Tibial artery (tissue), 4 donors: ENCODE measurements at regions of chr6 and their contacts with region 1.

Region 1: GRCh38 chr6:104046426-104046825 is 813.3 kb downstream of the HACE1 start:
- DNase-seq: no peak
- H3K4me3 ChIP-seq: no peak overlapping the region
- H3K27ac ChIP-seq: no peak overlapping the region
- H3K4me1 ChIP-seq: no peaks in the 10 kb centered on the region
- H3K27me3 ChIP-seq: no peaks in the 10 kb centered on the region
- CTCF ChIP-seq: no peak

Region 2: GRCh38 chr6:102793752-102794151 is 1252.7 kb before region 1 on chr6:
- intact Hi-C with region 1: loop called (anchors 5 kb)
- DNase-seq: no peak
- H3K4me3 ChIP-seq: no peak overlapping the region
- H3K27ac ChIP-seq: no peak overlapping the region
- H3K4me1 ChIP-seq: no peaks in the 10 kb centered on the region
- H3K27me3 ChIP-seq: no peaks in the 10 kb centered on the region
- CTCF ChIP-seq: no peak

Region 3: DNA sequence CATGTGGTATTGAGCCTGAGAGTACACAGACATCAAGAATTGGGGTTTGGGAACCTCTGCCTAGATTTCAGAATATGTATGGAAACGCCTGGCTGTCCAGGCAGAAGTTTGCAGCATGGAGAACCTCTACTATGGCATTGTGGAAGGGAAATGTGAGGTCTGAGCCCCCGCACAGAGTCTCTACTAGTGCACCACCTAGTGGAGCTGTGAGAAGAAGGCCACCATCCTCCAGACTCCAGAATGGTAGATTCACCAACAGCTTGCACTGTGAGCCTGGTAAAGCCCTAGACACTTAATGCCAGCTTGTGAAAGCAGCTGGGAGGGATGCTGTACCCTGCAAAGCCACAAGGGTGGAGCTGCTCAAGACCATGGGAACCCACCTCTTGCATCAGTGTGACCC is 155.1 kb after region 1 on chr6:
- intact Hi-C with region 1: no loop called
- DNase-seq: no peak
- H3K4me3 ChIP-seq: no peak overlapping the region
- H3K27ac ChIP-seq: no peak overlapping the region
- H3K4me1 ChIP-seq: no peaks in the 10 kb centered on the region
- H3K27me3 ChIP-seq: no peaks in the 10 kb centered on the region
- CTCF ChIP-seq: no peak